Left ventricle myocardium superior (tissue), 1 donor: ENCODE measurements at regions of chr14 and their contacts with region 1.

Region 1: GRCh38 chr14:83611491-83611890 is 1918.5 kb upstream of the FLRT2 start:
- DNase-seq: no peak
- ATAC-seq: no peak

Region 2: GRCh38 chr14:83646862-83647261 is 35.4 kb after region 1 on chr14:
- intact Hi-C with region 1: loop called (anchors 2 kb)
- DNase-seq: no peak
- ATAC-seq: no peak

Region 3: DNA sequence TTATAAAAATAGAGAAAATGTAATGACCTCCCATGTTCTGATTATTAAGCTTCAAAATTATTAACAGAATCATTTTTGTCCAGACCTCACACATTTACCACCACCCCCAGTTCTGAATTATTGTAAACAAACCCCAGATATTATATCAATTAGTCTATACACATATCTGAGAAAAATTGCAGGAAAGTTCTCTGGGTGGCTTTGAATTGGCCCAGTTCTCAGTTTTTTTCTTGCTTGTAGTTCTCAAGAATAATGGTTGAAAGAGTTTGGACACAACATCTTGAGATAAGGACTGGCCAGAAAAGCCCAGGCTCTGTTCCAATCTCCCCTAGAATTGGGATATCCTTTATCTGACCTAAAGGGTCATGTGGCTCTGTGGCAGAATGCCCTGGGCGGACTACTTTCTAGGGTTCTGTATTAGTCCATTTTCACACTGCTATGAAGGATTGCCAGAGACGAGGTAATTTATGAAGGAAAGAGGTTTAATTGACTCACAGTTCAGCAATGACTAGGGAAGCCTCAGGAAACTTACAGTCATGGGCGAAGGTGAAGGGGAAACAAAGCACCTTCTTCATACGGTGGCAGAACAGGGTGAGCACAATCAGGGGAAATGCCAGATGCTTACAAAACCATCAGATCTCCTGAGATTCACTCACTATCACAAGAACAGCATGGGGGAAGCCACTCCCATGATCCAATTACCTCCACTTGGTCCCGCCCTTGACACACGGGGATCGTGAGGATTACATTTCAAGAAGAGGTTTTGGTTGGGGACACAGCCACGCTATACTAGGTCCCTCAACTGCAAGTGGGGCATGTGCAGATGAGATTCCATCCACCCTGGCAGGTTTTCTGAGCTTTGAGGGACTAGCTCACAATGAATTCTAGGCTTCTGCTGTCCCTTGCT is 413.9 kb after region 1 on chr14:
- intact Hi-C with region 1: no loop called
- DNase-seq: peak; percentile 49
- ATAC-seq: peak; percentile 51